Mucosa of descending colon (tissue), 3 donors: ENCODE measurements at regions of chr2 and their contacts with region 1.

Region 1: GRCh38 chr2:146927080-146927711 is 917.6 kb upstream of the ACVR2A start:
- DNase-seq: peak in 2 of 3 donors; percentile 38 to 54
- ATAC-seq: peak; percentile 56
- H3K4me3 ChIP-seq: no peak overlapping the region
- H3K4me1 ChIP-seq: no peaks in the 10 kb centered on the region
- CTCF ChIP-seq: no peak

Region 2: DNA sequence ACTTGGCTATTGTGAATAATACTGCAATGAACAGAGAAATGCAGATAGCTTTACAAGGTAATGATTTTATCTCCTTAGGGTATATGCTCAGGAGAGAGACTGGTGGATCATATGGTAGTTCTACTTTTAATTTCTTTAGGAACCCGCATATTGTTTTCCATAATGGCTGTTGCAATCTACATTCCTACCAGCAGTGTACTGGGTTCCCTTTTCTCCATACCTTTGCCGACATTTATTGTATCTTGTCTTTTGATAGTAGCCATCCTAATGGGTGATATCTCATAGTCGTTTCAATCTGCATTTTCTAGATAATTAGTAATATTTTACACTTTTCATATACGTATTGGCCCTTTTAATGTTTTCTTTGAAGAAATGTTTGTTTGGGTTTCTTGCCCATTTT is 214.7 kb after region 1 on chr2:
- intact Hi-C with region 1: no loop called
- DNase-seq: no peak
- ATAC-seq: no peak
- H3K4me3 ChIP-seq: peak overlapping the region; percentile 3
- H3K4me1 ChIP-seq: no peaks in the 10 kb centered on the region
- CTCF ChIP-seq: no peak

Region 3: GRCh38 chr2:147389218-147389617 is 462.0 kb after region 1 on chr2:
- intact Hi-C with region 1: no loop called
- DNase-seq: no peak
- ATAC-seq: no peak
- H3K4me3 ChIP-seq: no peak overlapping the region
- H3K4me1 ChIP-seq: no peaks in the 10 kb centered on the region
- CTCF ChIP-seq: no peak

Region 4: GRCh38 chr2:147910990-147911473 is 983.8 kb after region 1 on chr2:
- intact Hi-C with region 1: loop called (anchors 10 kb)
- DNase-seq: peak in 1 of 3 donors; percentile 68
- ATAC-seq: peak; percentile 62
- H3K4me3 ChIP-seq: no peak overlapping the region
- H3K4me1 ChIP-seq: peaks cover 3% of the 10 kb centered on the region
- CTCF ChIP-seq: peak; percentile 53